ENCODE measurements at regions of chr1 and their contacts with region 1.

Region 1: GRCh38 chr1:145823565-145824498 is at the starts of genes POLR3C and RNF115:
- DNase-seq: peak; percentile 93
- H3K4me3 ChIP-seq: peak within 1 kb of the TSS; percentile 89
- H3K27ac ChIP-seq: peak within 1 kb of the TSS; percentile 66
- H3K4me1 ChIP-seq: peaks cover 36% of the 10 kb centered on the region
- CTCF ChIP-seq: 0 out of 2 replicates have a peak, but pooled peaks have one; percentile 11
- total RNA-seq, gene POLR3C: 48.9 and 57.1 TPM in 2 replicates
- total RNA-seq, gene RNF115: 14.7 and 14.8 TPM in 2 replicates

Region 2: GRCh38 chr1:145845514-145846161 is 21.8 kb after region 1 on chr1 and contains the start of gene NUDT17:
- CTCF ChIA-PET with region 1: interaction called, 12 read pairs
- POLR2A ChIA-PET with region 1: interaction called, 30 read pairs
- intact Hi-C with region 1: loop called (anchors 1 kb)
- DNase-seq: peak; percentile 91
- H3K4me3 ChIP-seq: peak within 1 kb of the TSS; percentile 72
- H3K27ac ChIP-seq: peak within 1 kb of the TSS; percentile 92
- H3K4me1 ChIP-seq: peaks cover 33% of the 10 kb centered on the region
- CTCF ChIP-seq: peak; percentile 98
- total RNA-seq, gene NUDT17: 10.8 and 16.9 TPM in 2 replicates